GM12878 (cell line): ENCODE measurements at regions of chr16 and their contacts with region 1.

Region 1: DNA sequence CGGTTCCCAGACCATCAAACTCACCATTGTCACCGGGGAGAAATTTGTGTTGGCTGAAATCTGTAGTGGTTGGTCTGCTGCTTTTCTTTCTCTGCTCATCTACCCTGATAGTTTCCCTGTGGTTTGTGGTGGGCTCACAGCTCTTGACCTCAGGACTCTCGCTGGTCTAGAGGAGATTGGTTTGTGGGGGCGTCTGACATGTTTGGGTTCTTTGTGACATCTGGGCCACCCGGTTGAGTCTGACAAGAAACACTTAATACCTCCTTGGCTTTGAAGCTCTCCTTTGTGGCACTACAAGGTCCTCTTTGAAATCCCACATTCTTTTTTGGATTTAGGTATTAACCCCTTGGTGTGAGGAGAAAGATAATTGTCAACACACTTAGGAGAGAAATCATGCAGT is 662.0 kb downstream of the WWOX start:
- DNase-seq: peak; percentile 34
- ATAC-seq: peak; percentile 92
- H3K4me3 ChIP-seq: no peak overlapping the region
- H3K27ac ChIP-seq: no peak overlapping the region
- H3K4me1 ChIP-seq: peaks cover 19% of the 10 kb centered on the region
- H3K27me3 ChIP-seq: no peaks in the 10 kb centered on the region; a peak in 1 of 4 replicates
- CTCF ChIP-seq: no peak
- EP300 ChIP-seq: peak; percentile 75 to 84
- POLR2A ChIP-seq: no peak
- RAD21 ChIP-seq: 0 out of 2 replicates have a peak, but pooled peaks have one; percentile 4

Region 2: GRCh38 chr16:78505544-78506366 is 255.7 kb before region 1 on chr16:
- CTCF ChIA-PET with region 1: no interaction called
- POLR2A ChIA-PET with region 1: no interaction called
- RAD21 ChIA-PET with region 1: no interaction called
- SMC1A ChIA-PET with region 1: no interaction called
- in situ Hi-C with region 1: no loop called
- intact Hi-C with region 1: no loop called
- DNase-seq: no peak
- ATAC-seq: no peak
- H3K4me3 ChIP-seq: no peak overlapping the region
- H3K27ac ChIP-seq: no peak overlapping the region
- H3K4me1 ChIP-seq: peaks cover 3% of the 10 kb centered on the region
- H3K27me3 ChIP-seq: no peaks in the 10 kb centered on the region
- CTCF ChIP-seq: no peak
- EP300 ChIP-seq: no peak
- POLR2A ChIP-seq: no peak
- RAD21 ChIP-seq: no peak

Region 3: GRCh38 chr16:78742501-78743283 is 18.7 kb before region 1 on chr16:
- CTCF ChIA-PET with region 1: no interaction called
- POLR2A ChIA-PET with region 1: interaction called, 3 read pairs
- RAD21 ChIA-PET with region 1: interaction called, 5 read pairs
- SMC1A ChIA-PET with region 1: interaction called, 21 read pairs
- in situ Hi-C with region 1: no loop called
- intact Hi-C with region 1: loop called (anchors 1 kb)
- DNase-seq: peak; percentile 83
- ATAC-seq: peak; percentile 97
- H3K4me3 ChIP-seq: peak overlapping the region; percentile 50; the same call in 1 of the 2 replicates
- H3K27ac ChIP-seq: peak overlapping the region; percentile 82
- H3K4me1 ChIP-seq: peaks cover 13% of the 10 kb centered on the region
- H3K27me3 ChIP-seq: 0 out of 4 replicates have a peak, but pooled peaks cover 0 to 3% of the 10 kb centered on the region in 2 experiments
- CTCF ChIP-seq: no peak
- EP300 ChIP-seq: peak; percentile 50 to 69; a peak in 2 of 4 replicates
- POLR2A ChIP-seq: peak; percentile 63
- RAD21 ChIP-seq: 0 out of 2 replicates have a peak, but pooled peaks have one; percentile 13

Region 4: GRCh38 chr16:78749745-78750268 is 11.6 kb before region 1 on chr16:
- CTCF ChIA-PET with region 1: interaction called, 7 read pairs
- POLR2A ChIA-PET with region 1: interaction called, 3 read pairs
- RAD21 ChIA-PET with region 1: interaction called, 8 read pairs
- SMC1A ChIA-PET with region 1: interaction called, 21 read pairs
- in situ Hi-C with region 1: no loop called
- intact Hi-C with region 1: no loop called
- DNase-seq: peak; percentile 41
- ATAC-seq: peak; percentile 91
- H3K4me3 ChIP-seq: 0 out of 2 replicates have a peak overlapping the region, but pooled peaks have one; percentile 15
- H3K27ac ChIP-seq: peak overlapping the region; percentile 49
- H3K4me1 ChIP-seq: peaks cover 6% of the 10 kb centered on the region
- H3K27me3 ChIP-seq: no peaks in the 10 kb centered on the region
- CTCF ChIP-seq: no peak
- EP300 ChIP-seq: peak in 1 of 2 experiments; percentile 47; a peak in 1 of 4 replicates
- POLR2A ChIP-seq: no peak
- RAD21 ChIP-seq: no peak